ENCODE measurements at regions of chr10 and their contacts with region 1.

Region 1: DNA sequence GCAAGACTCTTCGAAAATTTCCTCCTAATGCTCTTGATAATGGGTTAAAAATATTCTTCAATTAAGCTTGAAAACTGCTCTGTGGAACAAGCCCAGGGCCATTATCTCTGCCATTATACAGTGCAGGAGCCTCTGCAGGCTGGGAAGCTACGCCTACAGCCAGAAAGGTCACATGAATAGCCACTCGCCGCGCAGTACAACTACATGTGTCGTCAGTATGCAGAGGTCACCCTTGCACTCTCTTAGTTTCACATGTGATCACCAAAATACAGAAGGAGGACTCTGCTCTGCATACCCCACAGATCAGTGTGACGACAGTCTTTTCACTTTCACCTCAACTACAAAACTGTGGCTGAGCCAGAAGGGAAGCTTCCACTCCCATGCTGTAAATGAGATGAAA is 141.8 kb upstream of the C1QL3 start:
- DNase-seq: no peak
- H3K4me3 ChIP-seq: no peak overlapping the region
- H3K27ac ChIP-seq: no peak overlapping the region
- H3K4me1 ChIP-seq: no peaks in the 10 kb centered on the region
- H3K27me3 ChIP-seq: no peaks in the 10 kb centered on the region
- CTCF ChIP-seq: no peak
- EP300 ChIP-seq: no peak
- POLR2A ChIP-seq: no peak

Region 2: GRCh38 chr10:15703151-15703880 is 960.1 kb before region 1 on chr10:
- intact Hi-C with region 1: no loop called
- DNase-seq: no peak
- H3K4me3 ChIP-seq: no peak overlapping the region
- H3K27ac ChIP-seq: no peak overlapping the region
- H3K4me1 ChIP-seq: no peaks in the 10 kb centered on the region
- H3K27me3 ChIP-seq: no peaks in the 10 kb centered on the region
- CTCF ChIP-seq: no peak
- EP300 ChIP-seq: no peak
- POLR2A ChIP-seq: no peak

Region 3: GRCh38 chr10:16679511-16679910 is 16.1 kb after region 1 on chr10:
- intact Hi-C with region 1: loop called (anchors 2 kb)
- DNase-seq: no peak
- H3K4me3 ChIP-seq: no peak overlapping the region
- H3K27ac ChIP-seq: no peak overlapping the region
- H3K4me1 ChIP-seq: no peaks in the 10 kb centered on the region
- H3K27me3 ChIP-seq: no peaks in the 10 kb centered on the region
- CTCF ChIP-seq: no peak
- EP300 ChIP-seq: no peak
- POLR2A ChIP-seq: no peak

Measured in sigmoid colon (tissue), 7 donors.